T-cell (primary cell): ENCODE measurements at regions of chr18 and their contacts with region 1.

Region 1: DNA sequence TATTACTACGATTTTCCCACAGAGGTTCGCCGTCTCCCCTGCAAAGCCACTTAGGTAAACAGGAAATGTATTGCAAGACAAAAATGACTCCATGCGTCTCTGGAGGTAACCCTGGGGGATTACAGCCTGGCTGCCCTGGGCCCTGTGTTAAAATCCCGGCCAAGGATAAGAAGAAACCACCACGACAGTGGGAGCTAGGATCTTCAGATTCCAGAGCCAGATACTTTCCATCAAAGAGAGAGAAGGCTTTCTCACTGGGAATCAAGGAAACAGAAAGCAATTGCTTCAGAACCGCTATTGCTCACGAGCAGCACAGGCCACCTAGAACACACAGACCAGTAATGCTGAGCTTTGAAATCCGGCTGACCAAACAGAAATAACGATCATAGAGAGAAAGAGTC is 97.9 kb upstream of the ZNF516 start:
- DNase-seq: no peak
- ATAC-seq: no peak
- H3K4me3 ChIP-seq: no peak overlapping the region
- H3K4me3 Mint-ChIP-seq: no peak overlapping the region
- H3K27ac ChIP-seq: no peak overlapping the region
- H3K27ac Mint-ChIP-seq: no peak overlapping the region
- H3K4me1 ChIP-seq: no peaks in the 10 kb centered on the region
- H3K4me1 Mint-ChIP-seq: peaks cover 6 to 9% (median 7%) of the 10 kb centered on the region in 3 donors
- H3K27me3 ChIP-seq: peaks cover 0 to 32% of the 10 kb centered on the region in 2 experiments
- H3K27me3 Mint-ChIP-seq: peaks cover 57 to 64% of the 10 kb centered on the region in 2 donors

Region 2: GRCh38 chr18:76408480-76409067 is 184.4 kb before region 1 on chr18:
- CTCF ChIA-PET with region 1: interaction called in 1 of 2 experiments, 11 read pairs
- POLR2A ChIA-PET with region 1: no interaction called
- DNase-seq: no peak
- ATAC-seq: no peak
- H3K4me3 ChIP-seq: no peak overlapping the region
- H3K4me3 Mint-ChIP-seq: no peak overlapping the region
- H3K27ac ChIP-seq: no peak overlapping the region
- H3K27ac Mint-ChIP-seq: no peak overlapping the region
- H3K4me1 ChIP-seq: no peaks in the 10 kb centered on the region
- H3K4me1 Mint-ChIP-seq: peaks cover 38 to 53% (median 43%) of the 10 kb centered on the region in 3 donors
- H3K27me3 ChIP-seq: peaks cover 0 to 6% of the 10 kb centered on the region in 2 experiments
- H3K27me3 Mint-ChIP-seq: no peaks in the 10 kb centered on the region

Region 3: DNA sequence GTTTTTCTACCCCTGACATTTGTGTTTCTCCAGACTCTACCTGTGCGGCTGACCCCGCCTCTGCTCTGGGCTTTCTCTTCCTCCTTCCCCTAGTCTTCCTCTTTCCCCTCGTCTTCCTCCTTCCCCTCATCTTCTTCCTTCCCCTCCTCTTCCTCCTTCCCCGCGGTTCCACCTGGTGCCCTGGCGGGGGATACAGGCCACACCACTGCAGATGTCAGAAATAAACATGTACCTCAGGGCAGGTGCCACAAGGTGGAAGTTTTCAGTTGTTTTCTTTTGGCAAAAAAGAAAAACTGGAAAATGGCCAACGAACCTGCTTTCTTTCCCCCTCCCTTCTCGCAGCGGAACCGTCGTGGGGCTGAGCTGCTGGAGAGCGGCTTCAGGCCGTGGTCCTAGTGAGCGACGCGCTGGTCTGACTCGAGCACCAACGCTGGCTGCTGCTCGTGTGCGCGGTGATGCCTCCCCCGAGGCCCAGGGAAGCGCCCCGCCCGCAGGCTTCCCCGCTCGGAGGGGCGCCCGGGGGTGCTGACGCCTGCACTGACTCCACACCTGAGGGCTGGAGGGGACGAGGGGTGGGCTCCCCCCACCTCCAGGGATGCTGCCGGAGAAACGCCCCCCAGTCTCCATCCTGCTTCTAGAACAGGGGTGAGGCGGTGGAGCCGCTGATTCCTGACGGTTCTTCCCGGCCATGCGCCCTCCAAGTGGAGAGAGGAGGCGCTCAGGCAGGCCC is 14.2 kb before region 1 on chr18:
- CTCF ChIA-PET with region 1: no interaction called
- POLR2A ChIA-PET with region 1: no interaction called
- DNase-seq: no peak
- ATAC-seq: no peak
- H3K4me3 ChIP-seq: no peak overlapping the region
- H3K4me3 Mint-ChIP-seq: no peak overlapping the region
- H3K27ac ChIP-seq: no peak overlapping the region
- H3K27ac Mint-ChIP-seq: no peak overlapping the region
- H3K4me1 ChIP-seq: no peaks in the 10 kb centered on the region
- H3K4me1 Mint-ChIP-seq: no peaks in the 10 kb centered on the region
- H3K27me3 ChIP-seq: peaks cover 0 to 14% of the 10 kb centered on the region in 2 experiments
- H3K27me3 Mint-ChIP-seq: peaks cover 23 to 24% of the 10 kb centered on the region in 2 donors

Region 4: GRCh38 chr18:76626991-76627390 is 34.0 kb after region 1 on chr18:
- CTCF ChIA-PET with region 1: no interaction called
- POLR2A ChIA-PET with region 1: no interaction called
- DNase-seq: no peak
- ATAC-seq: no peak
- H3K4me3 ChIP-seq: no peak overlapping the region
- H3K4me3 Mint-ChIP-seq: no peak overlapping the region
- H3K27ac ChIP-seq: no peak overlapping the region
- H3K27ac Mint-ChIP-seq: no peak overlapping the region
- H3K4me1 ChIP-seq: no peaks in the 10 kb centered on the region
- H3K4me1 Mint-ChIP-seq: no peaks in the 10 kb centered on the region
- H3K27me3 ChIP-seq: peaks cover 0 to 14% of the 10 kb centered on the region in 2 experiments
- H3K27me3 Mint-ChIP-seq: peaks cover 16 to 27% of the 10 kb centered on the region in 2 donors